ENCODE measurements at regions of chr1 and their contacts with region 1.

Region 1: DNA sequence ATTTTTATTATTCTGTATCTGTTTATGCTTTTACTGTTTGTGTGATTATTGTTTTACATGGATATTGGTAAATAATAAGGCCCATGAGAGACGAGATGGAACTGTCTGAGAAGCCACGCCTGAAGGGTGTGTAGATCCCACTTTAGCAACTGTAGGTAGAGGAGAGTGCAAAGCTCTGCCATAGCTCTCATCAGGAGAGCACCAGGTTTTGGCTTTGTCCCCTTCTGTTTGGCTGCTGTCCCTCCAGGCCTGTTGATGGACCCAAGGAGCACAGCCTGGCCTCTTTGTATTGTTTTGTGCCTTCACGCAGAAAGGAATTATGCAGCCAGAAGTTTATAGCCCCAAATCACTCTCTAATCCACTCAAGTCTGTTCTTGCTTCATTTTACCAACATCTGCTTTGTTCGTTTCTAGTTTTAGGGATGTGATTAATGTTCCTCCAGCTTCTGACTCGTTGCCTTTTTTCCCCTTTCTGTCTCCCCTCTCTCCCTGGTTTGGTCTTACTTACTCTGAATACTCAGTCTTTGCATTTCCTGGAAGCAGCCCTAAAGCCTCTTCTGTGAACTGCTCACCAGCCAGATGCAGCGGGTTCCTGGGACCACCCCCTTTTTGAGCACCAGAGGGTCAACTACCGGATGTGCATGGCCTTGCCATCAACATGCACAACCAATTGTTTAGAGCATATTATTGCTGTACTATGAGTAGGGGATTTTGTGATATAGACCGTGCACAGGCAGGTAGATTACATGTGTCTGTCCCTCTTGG is 127.3 kb downstream of the HHAT start:
- DNase-seq: no peak
- ATAC-seq: no peak

Region 2: DNA sequence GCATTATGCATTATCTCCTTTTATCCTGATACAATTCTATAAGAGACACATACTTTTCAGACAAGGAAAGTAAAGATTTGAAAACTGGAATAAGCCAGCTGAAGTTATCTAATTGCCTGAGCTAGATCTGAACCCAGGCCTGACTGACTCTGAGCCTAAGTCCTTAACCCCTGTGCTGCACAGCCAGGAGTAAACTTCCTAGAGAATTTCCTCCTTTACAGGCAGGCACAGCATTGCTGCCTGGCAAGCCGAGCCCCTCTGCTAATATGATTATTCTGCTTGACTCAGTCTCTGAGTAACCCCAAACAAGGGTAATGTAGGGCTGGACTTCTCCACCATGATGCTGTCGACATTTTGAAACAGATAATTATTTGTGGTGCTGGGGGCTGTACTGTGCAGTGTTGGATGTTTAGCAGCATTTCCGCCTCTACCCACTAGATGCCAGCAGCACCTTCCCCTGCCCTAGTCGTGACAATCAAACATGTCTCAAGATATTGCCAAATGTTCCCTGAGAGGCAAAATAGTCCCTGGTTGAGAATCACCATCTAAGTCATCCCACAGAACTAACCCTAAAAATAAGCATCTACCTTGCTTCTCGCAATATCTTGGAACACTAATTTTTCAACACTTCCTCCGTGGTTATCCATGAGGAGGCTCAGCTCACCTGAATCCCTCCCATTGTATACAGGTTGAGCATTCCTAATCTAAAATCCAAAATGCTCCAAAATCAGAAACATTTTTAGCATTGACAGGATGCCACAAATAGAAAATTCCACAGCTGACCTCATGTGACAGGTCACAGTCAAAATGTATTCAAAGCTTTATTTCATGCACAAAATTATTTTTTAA is 854.0 kb before region 1 on chr1:
- intact Hi-C with region 1: no loop called
- DNase-seq: no peak
- ATAC-seq: peak; percentile 89

Region 3: DNA sequence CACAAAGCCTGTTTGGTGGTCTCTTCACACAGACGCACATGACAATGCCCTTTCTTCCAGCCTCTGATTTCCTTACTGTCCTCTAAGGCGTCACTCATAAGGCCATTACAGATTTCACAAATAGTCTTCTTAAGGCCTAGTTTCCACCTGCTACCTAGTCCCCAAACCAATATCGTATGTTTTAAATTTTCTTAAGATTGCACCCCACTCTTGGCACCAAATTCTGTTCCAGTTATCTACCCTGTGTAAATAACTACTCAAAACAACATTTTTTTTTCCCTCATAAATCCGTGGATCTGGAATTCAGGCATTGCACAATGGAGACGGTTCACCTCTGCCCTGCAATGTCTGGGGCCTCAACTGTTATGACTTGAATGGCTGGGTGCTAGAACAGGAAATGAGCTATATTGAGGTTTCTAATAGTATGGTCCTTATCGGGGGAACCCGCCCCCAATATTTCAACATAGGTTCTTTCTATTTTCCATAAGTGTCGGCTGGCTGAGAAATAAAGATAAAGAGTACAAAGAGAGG is 260.3 kb before region 1 on chr1:
- intact Hi-C with region 1: no loop called
- DNase-seq: no peak
- ATAC-seq: no peak

Region 4: DNA sequence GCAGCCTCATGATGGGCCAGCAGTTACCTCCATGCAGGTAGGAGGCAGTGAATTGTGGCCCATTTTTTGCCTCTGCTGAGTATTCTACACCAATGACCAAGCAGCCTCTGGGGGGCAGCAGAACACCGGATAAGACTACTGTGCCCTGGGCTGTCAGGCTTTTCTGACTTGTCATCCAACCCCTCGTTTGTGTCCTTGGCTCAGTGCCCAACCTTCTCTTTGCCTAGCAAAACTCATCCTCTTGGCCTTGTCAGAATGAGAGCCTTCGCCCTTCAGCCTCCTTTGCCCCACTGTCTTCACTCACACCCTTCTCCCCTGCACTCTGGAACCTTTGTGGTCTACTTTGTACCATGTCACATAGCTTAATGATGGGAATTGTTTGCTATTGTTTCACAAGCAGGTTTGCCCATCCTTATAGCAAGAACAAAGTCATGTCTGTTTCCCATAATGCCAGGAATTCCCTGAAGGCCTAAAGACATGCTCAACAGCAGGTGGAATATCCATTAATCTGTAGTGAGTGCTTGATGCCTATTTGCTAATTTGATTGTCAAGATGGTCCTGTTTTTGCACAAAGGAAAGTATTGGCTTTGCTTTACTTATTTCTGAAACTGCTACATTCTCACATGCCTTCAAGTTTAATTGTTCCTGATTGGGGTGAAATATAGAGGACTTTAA is 128.6 kb after region 1 on chr1:
- intact Hi-C with region 1: no loop called
- DNase-seq: peak; percentile 83
- ATAC-seq: peak; percentile 90

Region 5: DNA sequence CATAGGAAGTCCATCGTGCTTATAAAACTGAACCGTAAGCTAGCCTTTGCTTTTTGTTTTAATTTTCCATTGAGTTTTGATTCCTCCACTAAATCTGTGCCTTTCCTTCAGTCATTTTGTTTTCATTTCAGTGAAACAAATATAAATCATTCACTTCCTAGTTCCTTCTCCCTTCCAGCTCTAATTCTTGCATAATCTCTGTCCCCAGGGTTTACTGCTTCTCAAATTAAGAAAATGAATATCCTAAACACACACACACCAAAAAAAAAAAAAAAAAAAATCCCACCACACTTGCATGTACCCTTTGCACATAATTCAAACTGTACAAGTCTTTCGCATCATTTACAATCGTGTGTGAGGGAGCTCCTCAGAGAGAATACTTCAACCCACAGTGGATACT is 671.1 kb after region 1 on chr1:
- intact Hi-C with region 1: loop called (anchors 10 kb)
- DNase-seq: no peak
- ATAC-seq: no peak

Measured in left ventricle myocardium superior (tissue), 1 donor.